Transverse colon (tissue), 4 donors: ENCODE measurements at regions of chr11 and their contacts with region 1.

Region 1: GRCh38 chr11:108222686-108223448 is at the start of gene ATM:
- DNase-seq: peak; percentile 99
- H3K4me3 ChIP-seq: peak within 1 kb of the TSS; percentile 56 to 92 (median 72)
- H3K27ac ChIP-seq: peak within 1 kb of the TSS; percentile 91 to 96 (median 94)
- H3K4me1 ChIP-seq: peaks cover 8 to 63% (median 29%) of the 10 kb centered on the region in 4 donors
- H3K27me3 ChIP-seq: no peaks in the 10 kb centered on the region
- CTCF ChIP-seq: peak; percentile 60 to 90 (median 69)
- EP300 ChIP-seq: no peak
- POLR2A ChIP-seq: peak; percentile 3
- total RNA-seq, gene ATM: 31.7 to 135 (median 88.5) TPM

Region 2: GRCh38 chr11:106939157-106939556 is 1283.7 kb before region 1 on chr11:
- in situ Hi-C with region 1: no loop called
- intact Hi-C with region 1: no loop called
- DNase-seq: no peak
- H3K4me3 ChIP-seq: no peak overlapping the region
- H3K27ac ChIP-seq: no peak overlapping the region
- H3K4me1 ChIP-seq: no peaks in the 10 kb centered on the region
- H3K27me3 ChIP-seq: no peaks in the 10 kb centered on the region
- CTCF ChIP-seq: no peak
- EP300 ChIP-seq: no peak
- POLR2A ChIP-seq: no peak

Region 3: DNA sequence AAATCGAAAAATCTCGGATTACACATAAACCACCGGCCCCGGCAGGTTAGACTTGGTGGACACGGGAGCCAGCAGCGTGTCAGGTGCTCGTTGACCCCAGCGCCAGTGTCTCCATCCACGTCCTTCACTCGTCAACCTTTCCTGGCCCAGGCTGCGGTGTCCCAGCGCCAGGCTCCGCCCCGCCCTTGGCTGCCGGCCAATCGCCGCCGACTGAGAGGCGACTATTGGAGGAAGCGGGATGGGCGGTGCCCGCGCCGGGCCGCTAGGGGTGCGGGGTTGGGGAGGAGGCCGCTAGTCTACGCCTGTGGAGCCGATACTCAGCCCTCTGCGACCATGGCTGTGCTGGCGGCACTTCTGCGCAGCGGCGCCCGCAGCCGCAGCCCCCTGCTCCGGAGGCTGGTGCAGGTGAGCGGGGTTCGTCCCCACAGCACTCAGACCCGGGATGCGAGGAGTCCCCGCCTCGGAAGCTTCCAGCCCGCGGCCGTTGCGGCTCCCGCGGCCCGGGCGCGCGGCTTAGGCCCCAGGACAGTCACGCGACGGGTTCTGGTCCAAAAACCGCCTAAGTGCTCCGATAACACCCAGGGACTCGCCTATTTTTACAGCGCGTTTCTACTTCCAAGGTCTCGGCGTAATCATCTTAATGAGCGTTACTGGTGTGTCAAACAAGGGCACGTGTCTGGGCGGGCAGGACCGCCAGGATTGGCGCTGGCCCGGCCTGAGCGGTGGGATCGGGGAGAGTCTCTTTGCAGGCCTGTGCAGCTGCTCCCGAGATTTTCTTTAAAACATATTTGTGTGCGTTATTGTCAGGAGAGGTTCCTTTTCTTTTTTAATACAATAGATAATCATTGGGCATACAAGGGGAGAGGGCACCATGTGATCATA is 101.4 kb before region 1 on chr11 and contains the start of gene ACAT1:
- in situ Hi-C with region 1: loop called in 1 of 4 experiments (anchors 10 kb)
- intact Hi-C with region 1: loop called (anchors 5 kb)
- DNase-seq: peak; percentile 99
- H3K4me3 ChIP-seq: peak within 1 kb of the TSS; percentile 64 to 80 (median 76)
- H3K27ac ChIP-seq: peak within 1 kb of the TSS; percentile 93 to 96 (median 96)
- H3K4me1 ChIP-seq: peaks cover 9 to 39% (median 27%) of the 10 kb centered on the region in 4 donors
- H3K27me3 ChIP-seq: no peaks in the 10 kb centered on the region
- CTCF ChIP-seq: peak; percentile 36 to 79 (median 49)
- EP300 ChIP-seq: no peak
- POLR2A ChIP-seq: peak; percentile 92
- total RNA-seq, gene ACAT1: 77.4 to 450 (median 242) TPM

Region 4: DNA sequence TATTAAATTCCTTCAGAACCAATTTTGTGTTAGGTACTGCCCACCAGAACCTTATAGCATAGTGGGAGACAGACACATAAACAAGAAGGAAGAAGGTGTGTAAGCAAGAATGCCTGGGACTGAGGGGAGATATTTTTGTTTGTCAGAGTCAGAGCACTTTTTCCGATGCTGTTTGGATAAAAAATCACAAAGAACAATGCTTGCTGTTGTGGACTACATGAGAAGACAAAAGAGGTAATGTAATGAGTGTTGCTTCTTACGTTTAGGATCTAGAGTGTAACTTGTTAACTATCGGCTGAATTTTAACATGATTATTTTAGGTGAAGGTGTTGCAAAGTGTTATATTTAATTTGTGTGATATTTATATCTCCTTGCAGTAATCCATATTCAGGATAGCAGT is 84.9 kb after region 1 on chr11:
- in situ Hi-C with region 1: no loop called
- intact Hi-C with region 1: no loop called
- DNase-seq: no peak
- H3K4me3 ChIP-seq: no peak overlapping the region
- H3K27ac ChIP-seq: no peak overlapping the region
- H3K4me1 ChIP-seq: no peaks in the 10 kb centered on the region
- H3K27me3 ChIP-seq: no peaks in the 10 kb centered on the region
- CTCF ChIP-seq: no peak
- EP300 ChIP-seq: no peak
- POLR2A ChIP-seq: no peak

Region 5: DNA sequence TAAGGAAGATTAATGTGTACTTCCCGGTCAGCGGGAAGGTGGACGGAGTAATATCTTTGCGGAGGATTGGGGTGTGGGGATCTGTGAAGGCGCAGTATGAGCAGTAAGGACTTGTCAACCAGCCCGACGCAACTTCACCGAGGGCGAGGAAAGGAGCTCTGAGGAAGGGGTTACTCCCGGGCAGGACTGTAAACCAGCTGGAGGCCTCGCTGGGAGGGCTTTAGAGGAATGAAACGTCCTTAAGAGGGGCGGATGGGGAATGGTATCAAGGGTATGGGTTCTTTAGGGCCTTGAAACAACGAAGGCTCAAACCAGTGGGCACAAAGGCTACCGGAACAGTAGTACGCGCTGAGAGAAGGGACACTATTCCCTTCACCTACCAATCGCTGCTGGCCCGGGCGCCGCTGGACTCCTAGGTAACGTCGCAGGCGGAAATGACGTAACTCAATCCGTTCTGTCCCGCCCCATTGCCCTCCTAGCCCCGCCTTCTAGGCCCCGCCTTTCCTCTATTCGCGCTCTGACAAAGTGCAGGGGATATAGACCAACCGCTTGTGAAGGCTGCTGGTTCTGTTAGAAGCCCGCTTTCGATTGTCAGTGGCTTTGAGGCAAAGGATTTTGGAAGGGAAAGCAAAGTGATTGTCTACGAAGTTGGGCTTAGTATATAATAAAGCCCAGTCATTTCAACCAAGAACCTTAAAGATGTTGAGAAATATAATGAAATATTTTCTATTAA is 244.4 kb after region 1 on chr11 and contains the start of gene C11orf65:
- in situ Hi-C with region 1: loop called in 1 of 4 experiments (anchors 10 kb)
- intact Hi-C with region 1: no loop called
- DNase-seq: peak; percentile 98
- H3K4me3 ChIP-seq: peak within 1 kb of the TSS; percentile 40 to 65 (median 62)
- H3K27ac ChIP-seq: peak within 1 kb of the TSS; percentile 97 to 99 (median 98)
- H3K4me1 ChIP-seq: peaks cover 0 to 13% (median under 1%) of the 10 kb centered on the region in 4 donors
- H3K27me3 ChIP-seq: no peaks in the 10 kb centered on the region
- CTCF ChIP-seq: no peak
- EP300 ChIP-seq: no peak
- POLR2A ChIP-seq: peak; percentile 99
- total RNA-seq, gene C11orf65: 1.1 TPM in 2 of 4 donors, not detected in the others